GM10248 (cell line): ENCODE measurements at regions of chr9 and their contacts with region 1.

Region 1: GRCh38 chr9:4721736-4722135 is 19.3 kb downstream of the AK3 start:
- DNase-seq: no peak
- CTCF ChIP-seq: no peak

Region 2: GRCh38 chr9:4740638-4741364 is 19.1 kb after region 1 on chr9 and contains the start of gene AK3:
- CTCF ChIA-PET with region 1: interaction called, 10 read pairs
- POLR2A ChIA-PET with region 1: no interaction called
- DNase-seq: peak; percentile 98
- CTCF ChIP-seq: peak; percentile 50